Astrocyte of the cerebellum (primary cell): ENCODE measurements at regions of chr3 and their contacts with region 1.

Region 1: DNA sequence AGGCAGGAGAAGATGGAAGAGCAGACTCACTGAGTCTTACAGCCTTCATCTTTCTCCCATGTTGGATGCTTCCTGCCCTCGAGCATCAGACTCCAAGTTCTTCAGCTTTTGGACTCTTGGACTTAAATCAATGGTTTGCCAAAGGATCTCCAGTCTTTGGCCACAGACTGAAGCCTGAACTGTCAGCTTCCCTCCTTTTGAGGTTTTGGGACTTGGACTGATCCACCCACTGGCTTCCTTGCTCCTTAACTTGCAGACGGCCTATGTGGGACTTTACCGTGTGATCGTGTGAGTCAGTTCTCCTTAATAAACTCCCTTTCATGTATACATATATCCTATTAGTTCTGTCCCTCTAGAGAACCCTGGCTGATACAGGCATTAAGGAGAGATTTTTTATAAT is 62.4 kb upstream of the TNIK start:
- DNase-seq: no peak
- H3K4me3 ChIP-seq: no peak overlapping the region
- CTCF ChIP-seq: no peak

Region 2: GRCh38 chr3:171149526-171150116 is 373.0 kb before region 1 on chr3:
- in situ Hi-C with region 1: loop called (anchors 5 kb)
- DNase-seq: no peak
- H3K4me3 ChIP-seq: no peak overlapping the region
- CTCF ChIP-seq: no peak

Region 3: GRCh38 chr3:171383206-171384018 is 139.2 kb before region 1 on chr3:
- in situ Hi-C with region 1: no loop called
- DNase-seq: peak; percentile 53
- H3K4me3 ChIP-seq: no peak overlapping the region
- CTCF ChIP-seq: no peak